BJ (cell line): ENCODE measurements at regions of chr4 and their contacts with region 1.

Region 1: GRCh38 chr4:70945452-70946055 is 43.4 kb downstream of the MOB1B start:
- DNase-seq: no peak
- H3K4me3 ChIP-seq: no peak overlapping the region
- H3K27me3 ChIP-seq: no peaks in the 10 kb centered on the region
- CTCF ChIP-seq: no peak

Region 2: DNA sequence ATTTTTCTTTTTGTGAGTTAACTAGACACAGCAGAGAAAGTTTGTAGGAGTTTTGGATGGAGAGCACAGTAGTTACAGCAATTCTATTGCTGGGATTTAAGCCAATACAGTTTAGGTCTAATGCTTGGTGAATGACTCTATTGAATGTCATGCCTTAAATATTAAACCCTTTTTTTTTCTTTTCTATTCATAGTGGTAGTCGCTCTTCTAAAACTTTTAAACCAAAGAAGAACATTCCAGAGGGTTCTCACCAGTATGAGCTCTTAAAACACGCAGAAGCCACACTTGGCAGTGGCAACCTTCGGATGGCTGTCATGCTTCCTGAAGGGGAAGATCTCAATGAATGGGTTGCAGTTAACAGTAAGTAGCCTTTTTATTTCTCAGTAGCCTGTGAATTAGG is 13.1 kb after region 1 on chr4:
- CTCF ChIA-PET with region 1: interaction called, 6 read pairs
- POLR2A ChIA-PET with region 1: interaction called, 14 read pairs
- DNase-seq: peak; percentile 79
- H3K4me3 ChIP-seq: no peak overlapping the region
- H3K27me3 ChIP-seq: no peaks in the 10 kb centered on the region
- CTCF ChIP-seq: no peak

Region 3: DNA sequence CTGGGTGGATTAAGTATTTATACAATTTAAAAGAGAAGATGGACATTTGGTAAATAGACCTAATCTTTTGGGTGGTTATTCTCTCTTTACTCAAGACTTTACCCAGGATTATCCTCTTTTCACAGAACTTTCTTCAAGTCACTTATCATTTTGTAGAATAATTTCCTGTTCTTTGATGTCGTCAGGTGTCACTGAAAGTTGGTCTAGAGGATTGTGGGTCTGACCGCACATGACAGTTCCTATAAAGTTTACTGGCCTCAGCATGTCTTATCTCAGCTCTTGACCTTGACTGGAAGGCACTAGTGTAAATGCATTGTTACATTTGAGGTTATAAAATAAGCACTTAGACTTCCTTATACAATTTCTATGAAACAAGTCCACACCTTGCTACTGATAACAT is 253.4 kb after region 1 on chr4:
- CTCF ChIA-PET with region 1: no interaction called
- POLR2A ChIA-PET with region 1: no interaction called
- DNase-seq: no peak
- H3K4me3 ChIP-seq: no peak overlapping the region
- H3K27me3 ChIP-seq: no peaks in the 10 kb centered on the region
- CTCF ChIP-seq: no peak